ENCODE measurements at regions of chr21 and their contacts with region 1.

Region 1: DNA sequence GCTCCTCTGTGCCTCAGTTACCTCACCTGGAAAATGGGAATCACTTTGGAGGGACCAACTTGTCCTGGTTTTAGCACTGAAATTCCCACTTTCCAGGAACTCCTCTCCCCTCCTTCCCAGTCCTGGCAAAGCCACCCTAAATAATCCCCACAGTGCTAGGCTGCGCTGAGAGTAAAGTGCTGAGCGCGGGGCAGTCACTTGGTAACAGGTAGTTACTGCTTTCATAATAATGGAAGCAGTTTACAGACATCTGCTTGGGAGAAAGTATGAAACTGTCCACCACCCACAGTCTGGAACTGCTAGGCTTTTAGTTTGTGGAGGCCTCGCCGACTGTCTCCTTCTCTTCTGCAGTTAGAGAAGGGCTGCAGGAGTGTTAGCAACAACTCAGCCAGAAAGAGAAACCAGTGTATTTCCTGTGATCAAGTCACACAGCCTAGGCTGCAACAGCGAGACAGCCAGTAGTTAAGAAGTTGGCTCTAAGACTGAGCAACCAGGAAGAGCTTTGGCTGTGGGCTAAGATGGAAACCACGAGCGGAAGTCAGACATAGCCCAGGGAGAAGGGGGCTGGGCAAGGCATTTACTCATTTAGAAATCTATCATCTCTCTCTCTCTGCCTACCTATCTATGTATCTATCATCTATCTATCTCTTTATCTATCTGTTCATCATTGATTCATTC is 30.8 kb upstream of the ABCG1 start:
- DNase-seq: no peak
- H3K4me3 ChIP-seq: no peak overlapping the region
- H3K27ac ChIP-seq: peak overlapping the region in 3 of 4 donors; percentile 1 to 83 (median 73)
- H3K4me1 ChIP-seq: peaks cover 0 to 35% (median 0%) of the 10 kb centered on the region in 3 donors
- H3K27me3 ChIP-seq: peaks cover 0 to 36% (median 0%) of the 10 kb centered on the region in 4 donors
- CTCF ChIP-seq: no peak
- POLR2A ChIP-seq: peak in 1 of 4 donors; percentile 43

Region 2: GRCh38 chr21:42248783-42249597 is 60.9 kb after region 1 on chr21:
- intact Hi-C with region 1: loop called (anchors 10 kb)
- DNase-seq: no peak
- H3K4me3 ChIP-seq: no peak overlapping the region
- H3K27ac ChIP-seq: no peak overlapping the region
- H3K4me1 ChIP-seq: peaks cover 0 to 10% (median 6%) of the 10 kb centered on the region in 3 donors
- H3K27me3 ChIP-seq: peaks cover 0 to 59% (median 0%) of the 10 kb centered on the region in 4 donors
- CTCF ChIP-seq: no peak
- POLR2A ChIP-seq: no peak